Mammary epithelial cell (primary cell): ENCODE measurements at regions of chr5 and their contacts with region 1.

Region 1: GRCh38 chr5:134511788-134512650 is 13.5 kb upstream of the JADE2 start:
- DNase-seq: peak; percentile 35
- H3K4me3 ChIP-seq: no peak overlapping the region
- H3K27ac ChIP-seq: peak overlapping the region; percentile 80
- H3K4me1 ChIP-seq: peaks cover 44% of the 10 kb centered on the region
- H3K27me3 ChIP-seq: no peaks in the 10 kb centered on the region
- CTCF ChIP-seq: peak; percentile 25 to 70

Region 2: GRCh38 chr5:134370871-134371833 is 140.9 kb before region 1 on chr5 and contains the start of gene UBE2B:
- CTCF ChIA-PET with region 1: no interaction called
- dilution Hi-C with region 1: no loop called
- in situ Hi-C with region 1: no loop called
- intact Hi-C with region 1: loop called (anchors 5 kb)
- DNase-seq: peak; percentile 99
- H3K4me3 ChIP-seq: peak within 1 kb of the TSS; percentile 94 to 97 (median 95)
- H3K27ac ChIP-seq: peak within 1 kb of the TSS; percentile 89
- H3K4me1 ChIP-seq: peaks cover 9% of the 10 kb centered on the region
- H3K27me3 ChIP-seq: no peaks in the 10 kb centered on the region
- CTCF ChIP-seq: no peak
- total RNA-seq, gene UBE2B: 37.2 to 83.3 TPM

Region 3: GRCh38 chr5:134411546-134412266 is 100.3 kb before region 1 on chr5 and contains the start of gene CDKN2AIPNL:
- CTCF ChIA-PET with region 1: no interaction called
- dilution Hi-C with region 1: loop called (anchors 5 kb)
- in situ Hi-C with region 1: no loop called
- intact Hi-C with region 1: loop called (anchors 1 kb)
- DNase-seq: peak; percentile 81
- H3K4me3 ChIP-seq: peak within 1 kb of the TSS; percentile 85 to 91 (median 87)
- H3K27ac ChIP-seq: peak within 1 kb of the TSS; percentile 28
- H3K4me1 ChIP-seq: peaks cover 22% of the 10 kb centered on the region
- H3K27me3 ChIP-seq: no peaks in the 10 kb centered on the region
- CTCF ChIP-seq: peak; percentile 35 to 77
- total RNA-seq, gene CDKN2AIPNL: 28.7 to 30.0 TPM

Region 4: GRCh38 chr5:134451936-134452505 is 60.0 kb before region 1 on chr5:
- CTCF ChIA-PET with region 1: interaction called, 4 read pairs
- dilution Hi-C with region 1: loop called (anchors 5 kb)
- in situ Hi-C with region 1: loop called in 1 of 2 experiments (anchors 10 kb)
- intact Hi-C with region 1: no loop called
- DNase-seq: peak; percentile 70
- H3K4me3 ChIP-seq: no peak overlapping the region
- H3K27ac ChIP-seq: no peak overlapping the region
- H3K4me1 ChIP-seq: peaks cover 15% of the 10 kb centered on the region
- H3K27me3 ChIP-seq: no peaks in the 10 kb centered on the region
- CTCF ChIP-seq: no peak

Region 5: DNA sequence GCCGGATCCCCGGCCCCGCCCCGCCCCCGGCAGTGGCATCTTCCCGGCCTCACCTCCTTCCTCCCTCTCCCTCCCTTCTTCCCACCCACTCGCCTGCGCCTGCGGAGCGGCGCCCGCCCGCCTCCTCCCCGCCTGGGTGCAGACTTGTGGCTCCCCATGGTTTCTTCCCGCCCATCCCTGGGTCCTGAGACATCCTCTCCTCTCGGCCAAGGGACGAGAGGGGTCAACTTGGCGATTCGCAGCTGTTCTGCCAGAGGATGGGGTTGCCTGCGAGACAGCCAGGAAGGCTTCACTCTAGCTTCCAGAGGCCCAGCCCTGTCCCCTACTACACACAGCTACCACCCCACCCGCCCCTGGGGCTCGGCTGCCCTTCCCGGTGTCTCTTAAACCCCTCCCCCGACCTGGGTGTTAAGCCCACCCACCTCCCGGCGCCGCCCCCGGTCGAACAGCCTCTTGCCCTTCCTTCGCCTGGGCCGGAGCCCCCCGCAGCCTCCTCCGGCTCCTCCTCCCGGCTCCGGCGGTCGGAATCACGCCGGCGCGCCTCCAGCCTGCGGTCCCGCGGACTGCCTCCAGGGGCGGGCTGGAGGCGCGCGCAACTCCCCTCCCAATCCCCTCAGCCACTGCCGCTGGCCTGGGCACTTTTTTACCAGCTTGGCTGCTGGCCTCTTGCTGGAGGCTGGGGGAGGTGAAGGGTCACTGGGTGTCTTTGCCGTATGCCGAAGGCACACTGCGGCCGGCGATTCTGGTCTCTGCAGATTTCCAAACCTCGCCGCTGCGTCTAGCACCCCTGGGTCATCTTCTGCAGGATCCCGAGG is 15.3 kb after region 1 on chr5:
- CTCF ChIA-PET with region 1: interaction called, 9 read pairs
- dilution Hi-C with region 1: no loop called
- in situ Hi-C with region 1: no loop called
- intact Hi-C with region 1: loop called (anchors 2 kb)
- DNase-seq: peak; percentile 91
- H3K4me3 ChIP-seq: peak overlapping the region; percentile 87 to 96 (median 91)
- H3K27ac ChIP-seq: peak overlapping the region; percentile 35
- H3K4me1 ChIP-seq: peaks cover 17% of the 10 kb centered on the region
- H3K27me3 ChIP-seq: no peaks in the 10 kb centered on the region
- CTCF ChIP-seq: peak; percentile 49 to 84